Panc1 (cell line): ENCODE measurements at regions of chr5 and their contacts with region 1.

Region 1: GRCh38 chr5:141968914-141969608 is at the start of gene RNF14:
- DNase-seq: peak; percentile 53
- ATAC-seq: peak; percentile 99
- H3K4me3 ChIP-seq: peak within 1 kb of the TSS; percentile 95 to 96
- H3K27ac ChIP-seq: peak within 1 kb of the TSS; percentile 92
- H3K4me1 ChIP-seq: peaks cover 13% of the 10 kb centered on the region
- H3K27me3 ChIP-seq: no peaks in the 10 kb centered on the region
- CTCF ChIP-seq: peak; percentile 99
- total RNA-seq, gene RNF14: 72.1 TPM

Region 2: GRCh38 chr5:141664732-141665461 is 304.2 kb before region 1 on chr5:
- CTCF ChIA-PET with region 1: no interaction called
- POLR2A ChIA-PET with region 1: no interaction called
- in situ Hi-C with region 1: no loop called
- intact Hi-C with region 1: loop called (anchors 10 kb)
- DNase-seq: peak; percentile 41
- ATAC-seq: peak; percentile 94
- H3K4me3 ChIP-seq: no peak overlapping the region
- H3K27ac ChIP-seq: no peak overlapping the region
- H3K4me1 ChIP-seq: 0 out of 2 replicates have a peak, but pooled peaks cover 3% of the 10 kb centered on the region
- H3K27me3 ChIP-seq: no peaks in the 10 kb centered on the region
- CTCF ChIP-seq: peak; percentile 95

Region 3: GRCh38 chr5:142587354-142587965 is 618.4 kb after region 1 on chr5:
- CTCF ChIA-PET with region 1: no interaction called
- POLR2A ChIA-PET with region 1: no interaction called
- in situ Hi-C with region 1: no loop called
- intact Hi-C with region 1: no loop called
- DNase-seq: no peak
- ATAC-seq: peak; percentile 60; the same call in 1 of the 2 replicates
- H3K4me3 ChIP-seq: no peak overlapping the region
- H3K27ac ChIP-seq: no peak overlapping the region
- H3K4me1 ChIP-seq: no peaks in the 10 kb centered on the region
- H3K27me3 ChIP-seq: no peaks in the 10 kb centered on the region
- CTCF ChIP-seq: peak; percentile 86